HepG2 (cell line): ENCODE measurements at regions of chr17 and their contacts with region 1.

Region 1: DNA sequence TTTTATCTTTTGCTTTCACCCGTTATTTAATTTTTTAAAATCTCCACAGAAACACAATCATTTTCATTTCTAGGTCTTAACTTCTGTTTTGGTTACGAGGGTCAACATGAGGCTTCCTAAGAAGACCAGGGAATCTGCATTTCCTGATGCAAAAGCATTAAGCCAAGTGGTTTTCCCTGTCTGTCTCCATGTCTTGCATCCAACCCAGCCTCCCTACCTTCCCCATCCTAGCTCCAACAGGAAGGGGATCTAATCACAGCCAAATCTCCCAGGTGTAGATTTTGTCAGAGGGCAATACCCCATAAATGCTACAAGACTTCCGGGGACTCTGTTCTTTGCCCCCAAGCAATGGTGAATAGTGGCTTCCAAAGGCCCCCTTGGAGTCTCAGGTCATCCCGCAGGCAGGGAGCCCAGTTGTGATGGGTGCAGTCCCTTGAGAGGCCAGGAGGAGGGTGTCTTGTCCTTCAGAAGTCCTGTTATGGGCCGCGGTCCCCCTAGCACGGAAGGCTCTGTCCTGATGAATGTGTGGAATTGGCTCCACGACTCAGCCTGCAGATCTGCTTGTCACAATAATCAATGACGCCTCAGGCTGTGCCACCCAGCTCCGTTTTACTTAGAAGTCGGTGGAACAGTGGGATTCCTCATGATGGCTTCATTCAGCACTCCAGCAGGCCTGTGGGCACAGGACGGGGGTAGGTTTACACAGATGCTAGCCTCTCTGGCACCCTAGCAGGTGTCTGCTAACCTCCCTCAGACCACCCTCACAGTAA is 141.1 kb downstream of the RGS9 start:
- DNase-seq: peak; percentile 70
- ATAC-seq: peak; percentile 99
- H3K4me3 ChIP-seq: no peak overlapping the region
- H3K27ac ChIP-seq: no peak overlapping the region
- H3K4me1 ChIP-seq: peaks cover 5% of the 10 kb centered on the region; the same call in 1 of the 2 replicates
- H3K27me3 ChIP-seq: peaks cover 2 to 38% of the 10 kb centered on the region in 2 experiments; a peak in 2 of 5 replicates
- CTCF ChIP-seq: peak; percentile 94
- EP300 ChIP-seq: no peak
- POLR2A ChIP-seq: no peak
- RAD21 ChIP-seq: peak; percentile 89

Region 2: DNA sequence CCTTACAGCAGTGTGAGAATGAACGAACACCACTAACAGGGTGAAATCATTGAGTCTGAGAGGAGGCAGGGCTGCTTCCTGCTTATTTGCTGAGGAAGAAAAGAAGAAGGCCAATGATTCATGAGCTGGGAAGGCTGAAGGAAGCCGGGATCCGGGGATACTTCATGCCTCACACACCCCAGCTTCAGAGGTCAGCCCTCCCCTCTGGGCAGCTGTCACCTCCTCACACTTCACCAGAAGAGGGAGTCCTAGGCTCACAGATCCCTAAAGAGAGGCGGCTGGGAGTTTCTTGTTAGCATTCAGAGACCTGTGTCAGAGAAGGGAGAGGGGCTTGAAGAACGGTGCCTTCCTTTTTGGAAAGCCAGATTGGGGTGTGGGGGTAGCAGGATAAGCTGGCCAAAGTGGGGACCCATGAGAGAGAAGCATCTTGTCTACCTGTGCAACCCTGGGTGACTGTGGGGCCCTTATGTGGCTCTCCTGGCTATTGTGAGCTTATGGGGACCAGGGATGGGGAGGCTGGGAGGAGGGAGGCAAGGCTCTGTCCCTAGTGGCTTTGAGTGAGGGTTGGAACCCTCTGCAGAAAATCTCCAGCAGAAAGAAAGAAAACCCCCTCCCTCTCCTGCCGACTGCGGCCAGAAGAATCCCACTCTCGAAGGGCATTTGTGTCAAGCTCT is 46.4 kb before region 1 on chr17:
- CTCF ChIA-PET with region 1: no interaction called
- POLR2A ChIA-PET with region 1: no interaction called
- in situ Hi-C with region 1: no loop called
- intact Hi-C with region 1: no loop called
- DNase-seq: peak; percentile 70
- ATAC-seq: peak; percentile 97
- H3K4me3 ChIP-seq: no peak overlapping the region
- H3K27ac ChIP-seq: no peak overlapping the region
- H3K4me1 ChIP-seq: no peaks in the 10 kb centered on the region
- H3K27me3 ChIP-seq: peaks cover 3 to 11% of the 10 kb centered on the region in 2 experiments; a peak in 3 of 5 replicates
- CTCF ChIP-seq: peak; percentile 90
- EP300 ChIP-seq: no peak
- POLR2A ChIP-seq: no peak
- RAD21 ChIP-seq: peak; percentile 76

Region 3: GRCh38 chr17:65547253-65547670 is 269.0 kb after region 1 on chr17:
- CTCF ChIA-PET with region 1: no interaction called
- POLR2A ChIA-PET with region 1: no interaction called
- in situ Hi-C with region 1: no loop called
- intact Hi-C with region 1: loop called (anchors 1 kb)
- DNase-seq: peak; percentile 75
- ATAC-seq: peak; percentile 68
- H3K4me3 ChIP-seq: peak overlapping the region in 1 of 3 experiments; percentile 5; a peak in 2 of 6 replicates
- H3K27ac ChIP-seq: peak overlapping the region; percentile 53
- H3K4me1 ChIP-seq: peaks cover 33% of the 10 kb centered on the region
- H3K27me3 ChIP-seq: no peaks in the 10 kb centered on the region
- CTCF ChIP-seq: no peak
- EP300 ChIP-seq: peak in 1 of 2 experiments; percentile 58; a peak in 1 of 4 replicates
- POLR2A ChIP-seq: no peak
- RAD21 ChIP-seq: no peak